IMR-90 (cell line): ENCODE measurements at regions of chr18 and their contacts with region 1.

Region 1: GRCh38 chr18:80196528-80197250 is 50.6 kb downstream of the PARD6G start:
- DNase-seq: peak; percentile 42
- ATAC-seq: peak; percentile 38
- H3K4me3 ChIP-seq: no peak overlapping the region
- H3K27ac ChIP-seq: no peak overlapping the region
- H3K4me1 ChIP-seq: peaks cover 8% of the 10 kb centered on the region
- H3K27me3 ChIP-seq: no peaks in the 10 kb centered on the region
- CTCF ChIP-seq: no peak
- POLR2A ChIP-seq: no peak
- RAD21 ChIP-seq: no peak

Region 2: DNA sequence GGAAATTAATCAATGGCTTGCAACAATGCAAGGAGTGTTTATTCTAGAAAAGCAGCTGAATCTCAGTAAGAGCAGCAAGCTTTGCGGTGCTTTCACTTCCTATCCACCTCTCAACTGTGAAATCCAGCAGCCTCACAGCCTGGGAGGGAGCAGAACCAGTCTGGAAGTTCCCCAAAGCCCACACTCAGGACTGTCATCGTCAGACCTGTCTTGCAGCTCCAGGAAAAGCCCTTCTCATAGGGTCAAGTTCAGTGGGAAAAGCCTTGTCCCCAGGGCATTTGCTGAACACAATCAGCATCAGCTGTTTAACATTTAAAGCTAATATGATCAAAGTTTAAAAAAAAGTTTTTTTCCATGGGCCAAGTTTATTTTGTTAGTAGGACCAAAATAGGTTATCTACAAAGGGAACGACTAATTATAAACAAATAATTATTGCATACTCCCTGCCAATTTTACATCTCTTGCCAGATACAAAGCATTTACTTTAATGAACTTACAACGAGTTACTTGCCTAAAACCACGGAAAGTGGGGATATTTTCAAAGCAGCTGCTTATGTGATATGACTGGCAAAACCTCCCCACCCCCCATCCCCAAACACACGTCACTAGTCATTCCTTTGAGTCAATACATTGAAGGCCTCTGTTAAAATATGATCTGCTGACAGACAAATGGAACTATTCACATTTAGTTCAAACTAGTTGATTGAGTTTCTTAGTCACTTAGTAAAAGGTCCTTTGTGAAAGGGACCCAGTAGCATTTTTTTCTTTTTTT is 13.8 kb after region 1 on chr18:
- CTCF ChIA-PET with region 1: interaction called, 3 read pairs
- POLR2A ChIA-PET with region 1: no interaction called
- dilution Hi-C with region 1: no loop called
- in situ Hi-C with region 1: no loop called
- intact Hi-C with region 1: loop called (anchors 2 kb)
- DNase-seq: peak; percentile 33
- ATAC-seq: peak; percentile 70
- H3K4me3 ChIP-seq: no peak overlapping the region
- H3K27ac ChIP-seq: no peak overlapping the region
- H3K4me1 ChIP-seq: peaks cover 4% of the 10 kb centered on the region
- H3K27me3 ChIP-seq: no peaks in the 10 kb centered on the region
- CTCF ChIP-seq: no peak
- POLR2A ChIP-seq: no peak
- RAD21 ChIP-seq: no peak

Region 3: DNA sequence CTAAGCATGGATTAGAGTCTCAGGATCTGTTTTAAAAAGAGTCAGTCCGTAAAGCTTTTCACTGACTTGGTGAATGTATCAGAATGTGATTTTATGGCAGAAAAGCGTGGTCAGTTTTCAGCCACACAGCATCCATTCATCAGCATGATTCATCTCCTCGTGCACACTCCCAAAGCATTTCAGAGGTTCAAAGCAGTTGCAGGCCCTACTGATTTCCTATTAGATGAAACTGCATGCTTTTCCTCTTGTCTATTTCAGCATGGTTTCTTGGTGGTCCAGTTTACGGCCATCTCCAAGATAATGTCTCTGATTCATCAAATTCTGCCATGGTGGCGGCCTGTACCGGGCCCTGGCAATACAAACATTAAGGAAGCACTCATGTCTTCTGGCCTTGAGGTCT is 55.4 kb after region 1 on chr18:
- CTCF ChIA-PET with region 1: no interaction called
- POLR2A ChIA-PET with region 1: no interaction called
- dilution Hi-C with region 1: no loop called
- in situ Hi-C with region 1: no loop called
- intact Hi-C with region 1: no loop called
- DNase-seq: peak; percentile 74
- ATAC-seq: peak; percentile 8
- H3K4me3 ChIP-seq: no peak overlapping the region
- H3K27ac ChIP-seq: no peak overlapping the region
- H3K4me1 ChIP-seq: peaks cover 1% of the 10 kb centered on the region; the same call in 1 of the 2 replicates
- H3K27me3 ChIP-seq: no peaks in the 10 kb centered on the region; the same call in 1 of the 2 replicates
- CTCF ChIP-seq: no peak
- POLR2A ChIP-seq: no peak
- RAD21 ChIP-seq: no peak